ENCODE measurements at regions of chr6 and their contacts with region 1.

Region 1: DNA sequence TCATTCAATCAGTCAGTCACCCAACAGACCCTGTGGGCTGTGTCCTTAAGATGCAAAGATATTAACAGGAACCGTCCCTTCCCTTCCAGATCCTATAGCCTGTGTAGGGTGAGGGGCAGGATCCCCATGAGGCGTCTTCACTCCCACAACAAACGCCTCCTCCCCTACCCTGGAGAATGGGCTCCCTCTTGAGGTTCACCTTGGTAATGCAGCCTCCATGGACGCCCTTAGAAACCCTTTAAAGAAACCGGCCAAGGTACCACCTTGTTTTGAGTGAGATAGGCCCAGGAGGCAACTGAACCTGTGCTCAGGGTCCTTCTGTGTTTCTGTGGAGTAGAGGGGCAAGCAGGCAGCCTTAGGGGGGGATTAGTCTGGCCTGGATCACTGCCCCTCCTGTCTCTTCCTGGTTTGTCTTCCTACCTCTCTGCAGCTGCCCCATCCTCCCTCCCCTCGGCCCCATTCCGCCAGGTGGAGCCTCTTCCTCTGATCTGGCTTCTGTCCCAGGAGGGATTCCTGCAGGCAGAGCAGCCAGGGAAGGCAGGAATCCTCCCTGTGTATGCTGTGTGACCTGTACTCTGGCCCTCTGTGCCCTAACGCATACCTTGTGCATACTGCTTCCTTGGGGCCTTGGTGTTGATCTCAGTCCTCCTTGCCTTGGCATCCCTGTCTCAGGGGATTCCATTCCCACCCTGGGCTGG is 6.6 kb upstream of the GUCA1A start:
- DNase-seq: peak; percentile 60 to 87 (median 78)
- ATAC-seq: peak; percentile 98
- H3K4me3 ChIP-seq: no peak overlapping the region
- H3K4me3 Mint-ChIP-seq: no peak overlapping the region
- H3K27ac ChIP-seq: no peak overlapping the region
- H3K27ac Mint-ChIP-seq: no peak overlapping the region
- H3K4me1 ChIP-seq: no peaks in the 10 kb centered on the region
- H3K4me1 Mint-ChIP-seq: peaks cover 6% of the 10 kb centered on the region
- H3K27me3 ChIP-seq: no peaks in the 10 kb centered on the region
- H3K27me3 Mint-ChIP-seq: peaks cover 2% of the 10 kb centered on the region
- CTCF ChIP-seq: peak; percentile 89

Region 2: DNA sequence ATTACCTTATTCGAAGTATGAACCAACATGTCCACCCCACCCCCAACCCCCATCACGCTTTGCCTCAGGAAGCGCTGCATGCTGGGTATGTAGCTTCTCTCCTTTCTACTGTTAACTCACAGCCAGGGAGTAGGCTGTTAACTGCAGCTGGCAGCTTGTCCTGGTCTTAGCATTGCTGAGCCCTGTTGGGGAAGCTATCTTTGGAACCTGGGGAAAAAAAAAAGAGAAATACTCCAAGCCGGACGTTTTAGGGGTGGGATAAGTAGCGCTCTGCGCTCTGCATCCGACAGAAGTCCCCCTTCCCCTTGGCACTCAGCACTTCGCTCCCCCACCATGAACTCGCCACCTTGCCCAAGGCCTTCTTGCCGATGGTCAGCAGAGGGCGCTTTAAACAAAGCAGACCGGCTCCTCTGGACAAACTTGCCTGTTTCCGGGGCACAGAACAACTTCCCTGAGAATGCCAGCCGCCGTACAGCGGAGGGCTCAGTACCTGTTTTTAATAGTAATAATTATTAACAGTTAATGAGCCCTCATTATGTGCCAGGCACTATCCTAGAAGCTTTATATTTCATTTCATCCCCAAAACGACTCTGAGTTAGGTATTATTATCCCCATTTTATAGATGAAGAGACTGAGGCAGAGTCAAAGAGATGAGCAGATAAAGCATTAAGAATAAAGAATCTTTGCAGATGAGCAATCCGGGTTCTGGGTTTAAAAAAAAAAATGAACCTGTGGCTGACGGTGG is 563.6 kb before region 1 on chr6:
- CTCF ChIA-PET with region 1: interaction called, 3 read pairs
- POLR2A ChIA-PET with region 1: no interaction called
- intact Hi-C with region 1: loop called in 1 of 2 experiments (anchors 1 kb)
- DNase-seq: peak; percentile 45 to 87 (median 74)
- ATAC-seq: peak; percentile 81
- H3K4me3 ChIP-seq: no peak overlapping the region
- H3K4me3 Mint-ChIP-seq: no peak overlapping the region
- H3K27ac ChIP-seq: no peak overlapping the region
- H3K27ac Mint-ChIP-seq: no peak overlapping the region
- H3K4me1 ChIP-seq: no peaks in the 10 kb centered on the region
- H3K4me1 Mint-ChIP-seq: peaks cover 5% of the 10 kb centered on the region
- H3K27me3 ChIP-seq: peaks cover 0 to 4% of the 10 kb centered on the region in 2 experiments
- H3K27me3 Mint-ChIP-seq: peaks cover 12% of the 10 kb centered on the region
- CTCF ChIP-seq: peak; percentile 62

Region 3: GRCh38 chr6:41846666-41847237 is 319.8 kb before region 1 on chr6:
- CTCF ChIA-PET with region 1: interaction called, 19 read pairs
- POLR2A ChIA-PET with region 1: no interaction called
- intact Hi-C with region 1: loop called (anchors 1 kb)
- DNase-seq: peak; percentile 16 to 74 (median 53)
- ATAC-seq: peak; percentile 81
- H3K4me3 ChIP-seq: no peak overlapping the region
- H3K4me3 Mint-ChIP-seq: no peak overlapping the region
- H3K27ac ChIP-seq: no peak overlapping the region
- H3K27ac Mint-ChIP-seq: no peak overlapping the region
- H3K4me1 ChIP-seq: no peaks in the 10 kb centered on the region
- H3K4me1 Mint-ChIP-seq: peaks cover 3% of the 10 kb centered on the region
- H3K27me3 ChIP-seq: no peaks in the 10 kb centered on the region
- H3K27me3 Mint-ChIP-seq: no peaks in the 10 kb centered on the region
- CTCF ChIP-seq: peak; percentile 77

Region 4: GRCh38 chr6:42075159-42075838 is 91.3 kb before region 1 on chr6:
- CTCF ChIA-PET with region 1: interaction called, 3 read pairs
- POLR2A ChIA-PET with region 1: no interaction called
- intact Hi-C with region 1: loop called (anchors 1 kb)
- DNase-seq: peak; percentile 6 to 64 (median 47)
- ATAC-seq: no peak
- H3K4me3 ChIP-seq: no peak overlapping the region
- H3K4me3 Mint-ChIP-seq: no peak overlapping the region
- H3K27ac ChIP-seq: no peak overlapping the region
- H3K27ac Mint-ChIP-seq: peak overlapping the region; percentile 18
- H3K4me1 ChIP-seq: no peaks in the 10 kb centered on the region
- H3K4me1 Mint-ChIP-seq: peaks cover 5% of the 10 kb centered on the region
- H3K27me3 ChIP-seq: no peaks in the 10 kb centered on the region
- H3K27me3 Mint-ChIP-seq: no peaks in the 10 kb centered on the region
- CTCF ChIP-seq: peak; percentile 49

Region 5: DNA sequence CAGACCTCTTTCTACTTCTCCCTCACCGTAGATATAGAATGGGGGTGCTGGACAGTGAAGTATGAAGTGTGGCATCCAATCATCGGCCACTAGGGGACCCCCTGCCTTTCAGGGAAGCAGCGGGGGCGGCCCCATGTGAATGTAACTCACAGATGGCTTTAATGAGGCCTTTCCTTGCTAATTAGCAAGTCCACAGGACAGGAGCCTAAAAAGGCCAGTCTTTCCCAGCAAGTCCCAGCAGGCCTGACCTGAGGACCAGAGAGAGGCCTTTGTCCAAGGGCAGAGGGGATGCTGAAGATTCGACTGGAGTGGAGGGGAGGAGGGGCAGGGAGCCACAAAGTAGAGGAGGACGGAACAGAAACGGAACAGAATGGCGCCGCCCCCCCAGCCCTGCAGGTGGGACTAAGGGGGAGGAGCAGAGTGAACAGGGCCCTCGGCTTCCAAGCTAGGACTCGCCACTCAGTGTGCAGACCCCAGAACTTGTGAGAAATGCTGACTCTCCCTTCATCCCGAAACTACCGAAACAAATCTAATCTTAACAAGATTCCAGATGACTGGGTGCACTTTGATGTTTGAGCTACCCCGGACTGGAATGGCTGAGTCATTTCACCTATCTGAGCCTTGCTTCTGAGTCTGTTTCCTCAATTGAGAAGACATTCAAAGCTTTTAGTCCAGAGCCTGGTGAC is 29.9 kb before region 1 on chr6:
- CTCF ChIA-PET with region 1: interaction called, 3 read pairs
- POLR2A ChIA-PET with region 1: no interaction called
- intact Hi-C with region 1: loop called in 1 of 2 experiments (anchors 1 kb)
- DNase-seq: peak in 6 of 9 experiments; percentile 13 to 49 (median 30)
- ATAC-seq: peak; percentile 66
- H3K4me3 ChIP-seq: no peak overlapping the region
- H3K4me3 Mint-ChIP-seq: peak overlapping the region; percentile 68
- H3K27ac ChIP-seq: no peak overlapping the region
- H3K27ac Mint-ChIP-seq: no peak overlapping the region
- H3K4me1 ChIP-seq: peaks cover 6% of the 10 kb centered on the region
- H3K4me1 Mint-ChIP-seq: peaks cover 9% of the 10 kb centered on the region
- H3K27me3 ChIP-seq: no peaks in the 10 kb centered on the region
- H3K27me3 Mint-ChIP-seq: peaks cover 6% of the 10 kb centered on the region
- CTCF ChIP-seq: no peak

Measured in CD8-positive, alpha-beta T cell (primary cell).